Posterior vena cava (tissue), 2 donors: ENCODE measurements at regions of chr16 and their contacts with region 1.

Region 1: GRCh38 chr16:78116946-78117345 is 17.5 kb downstream of the WWOX start:
- DNase-seq: no peak

Region 2: DNA sequence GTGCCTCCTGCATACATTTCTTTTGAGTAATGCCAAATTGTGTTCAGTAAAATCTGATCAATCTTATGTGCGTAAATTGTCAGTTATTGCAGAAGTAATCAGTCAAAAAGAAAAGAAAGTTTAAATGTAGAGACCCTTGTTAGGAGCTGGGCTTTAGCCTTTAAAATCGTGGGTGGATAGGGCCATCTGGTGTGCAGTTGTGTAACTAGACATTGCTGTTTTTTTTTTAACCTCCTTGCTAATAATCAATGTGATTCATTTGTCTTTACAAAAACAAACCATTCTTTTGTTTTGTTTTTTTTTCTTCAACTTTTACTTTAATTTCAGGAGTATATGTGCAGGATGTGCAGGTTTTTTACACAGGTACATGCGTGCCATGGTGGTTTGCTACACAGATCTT is 22.8 kb before region 1 on chr16:
- intact Hi-C with region 1: loop called in 1 of 2 experiments (anchors 1 kb)
- DNase-seq: no peak

Region 3: DNA sequence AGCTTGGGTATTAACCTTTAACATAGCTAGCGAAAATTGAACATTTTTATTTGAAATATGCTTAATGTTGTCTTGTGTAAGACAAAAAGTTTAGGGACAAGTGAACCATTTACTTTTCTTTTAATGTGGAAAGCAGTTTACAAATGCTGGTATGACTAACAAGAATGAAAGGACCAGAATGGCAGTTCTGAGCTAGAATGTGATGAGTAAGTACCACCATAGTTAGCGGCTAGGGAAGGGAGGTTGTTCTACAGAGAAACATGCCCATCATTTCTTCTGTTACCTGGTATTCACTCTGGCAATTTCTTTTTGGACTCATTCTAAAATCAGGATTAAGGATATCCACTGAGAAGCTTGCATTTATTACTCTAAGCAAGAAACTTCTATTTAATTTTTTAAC is 103.6 kb after region 1 on chr16:
- intact Hi-C with region 1: no loop called
- DNase-seq: no peak

Region 4: DNA sequence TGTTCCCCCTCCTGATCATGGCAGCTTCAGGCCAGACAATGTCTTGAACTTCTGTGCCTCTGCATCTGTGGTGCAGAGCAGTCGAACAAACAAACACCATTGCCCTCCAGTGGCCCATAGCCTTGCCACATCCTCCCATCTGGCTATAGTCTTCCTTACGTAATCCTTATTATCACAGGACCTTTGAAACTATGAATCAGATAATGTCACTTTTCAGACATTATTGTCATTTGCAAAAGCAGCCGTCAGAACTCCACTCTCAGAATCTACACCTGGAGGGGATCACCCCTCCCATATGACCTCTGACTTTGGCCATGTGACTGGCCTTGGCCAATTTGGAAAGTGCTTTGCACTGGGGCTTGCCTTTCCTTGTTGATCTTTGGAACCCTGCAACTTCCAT is 1096.3 kb after region 1 on chr16:
- intact Hi-C with region 1: no loop called
- DNase-seq: no peak